Activated CD4-positive, alpha-beta T cell treated with anti-CD3 and anti-CD28 coated beads, Interleukin-2, amount 10 ng/mL, durations not matched to agents 24 days and 14 days (primary cell): ENCODE measurements at regions of chr12 and their contacts with region 1.

Region 1: GRCh38 chr12:93387780-93388179 is 10.1 kb downstream of the NUDT4 start:
- DNase-seq: no peak
- H3K4me3 Mint-ChIP-seq: no peak overlapping the region
- H3K27ac Mint-ChIP-seq: peak overlapping the region; percentile 72
- H3K4me1 Mint-ChIP-seq: peaks cover 35% of the 10 kb centered on the region
- H3K27me3 Mint-ChIP-seq: no peaks in the 10 kb centered on the region

Region 2: DNA sequence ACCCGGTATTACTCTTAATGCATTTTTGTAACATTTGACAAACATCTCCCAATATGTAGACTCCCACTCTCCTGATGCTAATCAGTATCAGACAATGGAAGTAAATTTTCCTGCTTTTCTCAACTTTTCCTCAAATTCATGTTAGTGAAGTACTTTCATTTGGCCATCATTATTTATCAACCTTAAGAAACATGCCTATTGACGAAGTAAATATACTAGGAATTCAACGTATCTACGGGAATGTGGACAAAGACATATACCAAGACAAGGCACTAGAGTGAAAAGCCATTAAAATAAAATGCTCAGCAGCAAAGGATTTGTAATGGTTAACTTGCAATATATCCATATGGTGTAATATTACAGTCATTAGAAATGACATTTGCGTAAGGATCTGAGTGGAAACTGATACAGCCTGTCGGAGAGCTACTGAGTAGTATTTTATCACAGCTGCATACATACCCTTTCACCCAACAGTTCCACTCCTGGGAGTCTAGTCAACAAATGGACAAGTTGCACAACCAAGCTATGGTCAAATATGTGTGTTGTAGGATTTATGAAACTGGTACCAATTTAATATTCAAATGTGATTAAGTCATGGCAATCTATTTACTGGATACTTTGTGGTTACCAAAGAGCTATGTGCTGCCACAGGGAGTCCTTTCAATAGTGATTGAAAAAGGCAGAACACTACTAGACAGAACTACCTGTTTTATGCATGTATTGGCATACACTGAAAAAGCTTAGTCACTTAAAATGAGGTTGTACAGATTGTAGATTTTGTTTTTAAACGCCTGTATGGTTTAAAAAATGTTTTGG is 16.4 kb after region 1 on chr12:
- intact Hi-C with region 1: no loop called
- DNase-seq: no peak
- H3K4me3 Mint-ChIP-seq: no peak overlapping the region
- H3K27ac Mint-ChIP-seq: no peak overlapping the region
- H3K4me1 Mint-ChIP-seq: peaks cover 20% of the 10 kb centered on the region
- H3K27me3 Mint-ChIP-seq: no peaks in the 10 kb centered on the region

Region 3: DNA sequence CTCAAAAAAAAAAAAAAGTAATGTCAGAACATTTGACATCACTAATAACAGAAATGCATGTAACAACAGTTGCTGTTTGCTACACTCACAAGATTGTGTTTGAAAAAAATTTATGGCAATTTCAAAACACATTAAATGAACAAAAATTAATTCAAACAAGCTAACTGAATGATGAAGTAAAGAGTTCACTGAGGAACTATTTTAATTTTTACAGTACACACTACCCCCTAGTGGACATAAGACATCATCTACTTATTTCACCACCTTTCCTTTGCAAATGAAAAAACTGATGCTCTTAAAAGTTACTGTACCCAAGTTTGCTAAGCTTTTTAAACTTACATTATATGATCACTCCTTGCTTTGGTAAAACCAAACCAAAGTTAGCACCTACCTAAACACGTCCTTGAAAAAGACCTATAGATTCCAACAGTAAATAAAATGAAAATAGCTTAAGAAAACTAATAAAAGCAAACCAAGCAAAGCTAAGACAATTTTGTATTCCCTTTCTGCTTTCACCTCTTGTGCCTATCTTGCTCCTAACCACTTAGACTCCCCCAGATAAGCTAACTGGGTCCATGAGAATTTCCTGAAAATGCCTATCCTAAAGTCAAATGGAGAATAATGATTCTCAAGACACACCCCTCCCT is 31.7 kb after region 1 on chr12:
- intact Hi-C with region 1: loop called (anchors 2 kb)
- DNase-seq: peak; percentile 52
- H3K4me3 Mint-ChIP-seq: no peak overlapping the region
- H3K27ac Mint-ChIP-seq: peak overlapping the region; percentile 41
- H3K4me1 Mint-ChIP-seq: peaks cover 62% of the 10 kb centered on the region
- H3K27me3 Mint-ChIP-seq: no peaks in the 10 kb centered on the region